Left cardiac atrium (tissue), 4 donors: ENCODE measurements at regions of chr4 and their contacts with region 1.

Region 1: DNA sequence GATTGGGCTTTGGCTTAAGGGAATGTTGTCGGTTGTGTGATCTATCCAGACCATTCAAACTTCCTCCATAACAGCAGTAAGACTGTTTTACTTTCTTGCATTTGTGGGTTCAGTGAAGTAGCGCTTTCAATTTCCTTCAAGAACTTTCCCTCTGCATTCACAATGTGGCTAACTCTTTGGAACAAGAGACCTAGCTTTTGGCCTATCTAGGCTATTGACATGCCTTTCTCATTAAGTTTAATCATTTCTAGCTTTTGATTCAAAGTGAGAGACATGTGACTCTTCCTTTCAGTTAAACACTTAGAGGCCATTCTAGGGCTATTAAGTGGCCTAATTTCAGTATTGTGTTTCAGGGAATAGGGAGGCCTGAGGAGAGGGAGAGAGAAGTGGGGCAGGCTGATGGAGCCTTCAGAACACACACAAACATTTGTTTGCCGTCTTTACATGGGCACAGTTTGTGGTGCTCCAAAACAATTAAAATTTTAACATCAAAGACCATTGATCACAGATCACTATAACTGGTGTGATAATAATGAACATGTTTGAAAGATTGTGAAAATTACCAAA is 34.1 kb downstream of the ADH5 start:
- DNase-seq: no peak
- ATAC-seq: no peak

Region 2: GRCh38 chr4:97670703-97671269 is 1383.7 kb before region 1 on chr4:
- intact Hi-C with region 1: no loop called
- DNase-seq: no peak
- ATAC-seq: no peak

Region 3: DNA sequence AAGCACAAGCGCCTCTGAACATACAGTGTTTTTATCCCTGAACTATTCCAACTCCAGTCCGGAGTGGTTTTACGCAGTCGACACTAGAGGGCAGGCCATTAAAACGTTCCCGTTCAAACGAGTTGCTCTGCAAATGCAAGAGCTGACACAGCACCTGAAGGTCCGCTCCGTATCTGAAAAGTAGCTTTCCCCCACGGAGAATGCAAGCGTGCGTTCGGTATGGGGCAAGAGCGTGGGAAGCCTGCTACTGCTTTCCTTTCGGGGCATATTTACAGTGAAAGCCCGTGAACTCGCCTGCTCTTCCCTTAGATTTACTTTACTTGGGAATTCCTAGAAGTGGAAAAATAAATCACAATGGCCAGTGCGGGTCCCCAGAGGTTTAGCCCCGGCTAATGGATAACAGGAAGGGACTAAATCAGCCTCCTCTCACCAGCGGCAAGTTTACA is 586.9 kb before region 1 on chr4:
- intact Hi-C with region 1: loop called in 1 of 2 experiments (anchors 10 kb)
- DNase-seq: peak; percentile 73
- ATAC-seq: peak; percentile 90 to 95

Region 4: GRCh38 chr4:98939892-98940298 is 114.6 kb before region 1 on chr4:
- intact Hi-C with region 1: loop called in 1 of 2 experiments (anchors 5 kb)
- DNase-seq: no peak
- ATAC-seq: peak; percentile 49 to 70

Region 5: DNA sequence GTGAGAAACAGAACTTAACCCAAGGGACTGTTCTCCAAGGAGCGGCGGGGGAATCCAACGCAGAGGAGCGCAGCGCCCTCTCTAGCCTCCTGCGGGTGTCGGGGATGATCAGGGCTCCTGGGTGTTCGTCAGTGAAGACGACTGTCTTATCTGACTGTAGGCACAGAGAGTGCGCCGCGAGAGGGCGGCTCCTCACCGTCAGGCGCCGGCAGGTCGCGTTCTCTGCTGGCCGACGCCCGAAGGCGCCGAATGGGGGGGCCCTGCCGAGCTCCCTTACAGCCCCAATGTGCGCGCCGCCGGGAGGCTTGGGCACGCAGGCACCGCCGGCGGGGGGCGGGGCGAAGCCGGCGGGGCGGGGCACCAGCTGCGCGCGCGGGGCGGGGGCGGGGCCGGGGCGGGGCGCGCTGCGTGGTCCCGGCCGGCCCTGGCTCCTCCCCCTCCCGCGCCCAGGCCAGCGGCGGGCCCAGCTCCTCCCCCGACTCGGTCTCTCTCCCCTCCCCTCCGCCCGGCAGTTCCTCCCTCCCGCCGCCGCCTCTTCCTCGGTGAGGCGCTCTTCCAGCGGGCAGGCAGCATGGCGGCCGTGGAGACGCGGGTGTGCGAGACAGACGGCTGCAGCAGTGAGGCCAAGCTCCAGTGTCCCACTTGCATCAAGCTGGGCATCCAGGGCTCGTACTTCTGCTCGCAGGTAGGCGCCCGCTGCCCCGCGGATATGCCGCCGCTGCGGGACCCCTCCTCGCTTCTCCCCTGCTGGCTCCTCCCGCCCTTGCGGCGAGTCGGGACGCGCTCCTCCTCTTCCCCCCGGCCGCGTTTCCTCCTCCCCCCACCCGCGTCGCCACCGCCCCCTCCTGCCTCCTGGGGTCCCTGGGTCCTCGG is 59.1 kb before region 1 on chr4 and contains the start of gene METAP1:
- intact Hi-C with region 1: loop called (anchors 5 to 10 kb)
- DNase-seq: peak; percentile 96
- ATAC-seq: peak; percentile 93 to 97
- total RNA-seq, gene METAP1: 38.0 to 50.0 TPM

Region 6: DNA sequence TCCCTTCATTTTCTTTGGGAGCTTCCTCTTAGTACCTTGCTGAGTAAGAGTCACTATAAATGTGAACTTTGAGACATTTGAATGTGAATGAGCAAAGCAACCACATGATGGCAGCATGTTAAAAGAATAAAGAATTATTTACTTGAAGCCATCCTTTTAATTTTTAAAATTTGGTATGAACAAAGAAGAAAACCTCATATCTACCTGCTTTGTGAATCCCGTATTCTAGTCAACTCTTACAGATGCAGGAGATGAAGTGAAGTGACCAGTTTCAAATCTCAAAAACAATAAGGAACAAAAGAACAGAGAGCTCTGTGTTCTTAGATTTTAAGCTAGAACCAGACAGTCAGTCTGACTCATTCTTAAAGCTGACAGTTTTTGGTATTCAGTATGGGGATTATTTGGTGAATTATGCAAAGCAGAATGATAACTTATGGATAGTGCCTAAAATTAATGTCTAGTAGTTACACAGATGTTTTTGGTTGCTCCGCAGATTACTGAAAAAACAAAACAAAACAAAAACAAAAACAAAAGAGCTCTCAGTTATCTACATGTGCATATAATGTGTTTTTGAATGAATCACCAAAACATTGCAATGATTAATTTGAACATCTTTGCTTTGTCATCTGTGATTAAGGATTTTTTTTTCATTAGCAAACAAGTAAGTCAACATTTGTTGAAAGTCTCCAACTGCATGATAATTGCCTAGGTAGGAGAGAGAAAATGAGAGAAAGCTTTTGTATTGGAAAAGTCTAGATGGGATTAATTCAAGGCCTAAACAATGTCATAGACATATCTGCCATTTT is 943.8 kb after region 1 on chr4:
- intact Hi-C with region 1: no loop called
- DNase-seq: no peak
- ATAC-seq: peak in 1 of 2 donors; percentile 47